Mammary epithelial cell (primary cell): ENCODE measurements at regions of chr14 and their contacts with region 1.

Region 1: GRCh38 chr14:46344327-46344937 is 307.1 kb downstream of the RPL10L start:
- DNase-seq: peak; percentile 12
- H3K4me3 ChIP-seq: no peak overlapping the region
- H3K27ac ChIP-seq: no peak overlapping the region
- H3K4me1 ChIP-seq: no peaks in the 10 kb centered on the region
- H3K27me3 ChIP-seq: no peaks in the 10 kb centered on the region
- CTCF ChIP-seq: peak; percentile 36 to 72

Region 2: DNA sequence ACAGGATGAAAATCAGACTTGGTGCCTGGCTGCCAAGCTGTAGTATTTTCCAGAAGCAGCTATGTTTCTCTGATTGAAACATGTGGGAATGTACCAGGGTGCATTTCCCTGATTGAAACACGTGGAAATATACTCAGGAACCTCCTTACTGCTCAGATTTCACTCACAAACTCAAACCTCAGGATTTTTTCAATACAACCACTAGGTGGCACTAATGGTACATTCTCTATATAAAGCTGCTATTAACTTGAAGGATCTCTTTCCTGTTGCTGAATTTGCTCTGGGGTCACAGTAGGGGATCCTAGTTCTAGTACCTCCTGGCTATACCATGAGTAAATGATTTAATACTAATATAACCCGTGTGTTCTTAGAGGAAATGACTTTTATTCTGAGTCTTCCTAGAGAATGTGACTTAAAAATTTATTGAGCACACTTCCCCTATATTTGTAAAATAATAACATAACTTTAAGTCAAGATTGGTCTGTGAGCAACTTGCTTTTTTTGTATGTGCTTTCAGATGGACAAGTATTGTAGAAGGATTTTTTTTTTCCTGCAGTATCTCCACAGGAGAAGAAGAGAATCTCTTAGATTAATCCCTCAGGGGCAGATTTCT is 917.7 kb before region 1 on chr14:
- CTCF ChIA-PET with region 1: no interaction called
- dilution Hi-C with region 1: no loop called
- in situ Hi-C with region 1: no loop called
- intact Hi-C with region 1: loop called (anchors 10 kb)
- DNase-seq: peak; percentile 49
- H3K4me3 ChIP-seq: no peak overlapping the region
- H3K27ac ChIP-seq: no peak overlapping the region
- H3K4me1 ChIP-seq: no peaks in the 10 kb centered on the region
- H3K27me3 ChIP-seq: no peaks in the 10 kb centered on the region
- CTCF ChIP-seq: peak; percentile 47 to 67

Region 3: GRCh38 chr14:45610318-45610717 is 734.1 kb before region 1 on chr14:
- CTCF ChIA-PET with region 1: no interaction called
- dilution Hi-C with region 1: no loop called
- in situ Hi-C with region 1: no loop called
- intact Hi-C with region 1: loop called (anchors 2 kb)
- DNase-seq: peak; percentile 33
- H3K4me3 ChIP-seq: no peak overlapping the region
- H3K27ac ChIP-seq: no peak overlapping the region
- H3K4me1 ChIP-seq: no peaks in the 10 kb centered on the region
- H3K27me3 ChIP-seq: no peaks in the 10 kb centered on the region
- CTCF ChIP-seq: peak; percentile 45 to 64

Region 4: DNA sequence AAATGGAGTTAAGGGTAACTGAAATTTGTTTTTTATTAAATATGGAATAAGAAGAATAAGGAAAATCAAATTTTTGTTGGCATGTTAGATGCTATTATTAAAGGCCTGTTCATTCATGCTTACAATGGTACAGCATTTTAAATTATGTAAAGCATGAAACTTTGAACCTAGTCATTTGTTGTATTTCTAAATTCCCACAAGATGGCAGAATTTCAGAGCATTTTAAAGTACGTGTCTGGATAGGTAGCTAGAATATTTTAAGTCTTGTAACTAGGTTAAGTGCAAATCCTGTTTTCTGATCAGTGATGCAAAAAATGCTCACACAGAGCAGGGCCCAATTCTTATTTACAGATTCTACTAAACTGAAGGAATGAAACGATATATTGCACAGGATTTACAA is 505.8 kb before region 1 on chr14:
- CTCF ChIA-PET with region 1: no interaction called
- dilution Hi-C with region 1: no loop called
- in situ Hi-C with region 1: no loop called
- intact Hi-C with region 1: loop called (anchors 10 kb)
- DNase-seq: peak; percentile 6
- H3K4me3 ChIP-seq: no peak overlapping the region
- H3K27ac ChIP-seq: no peak overlapping the region
- H3K4me1 ChIP-seq: no peaks in the 10 kb centered on the region
- H3K27me3 ChIP-seq: no peaks in the 10 kb centered on the region
- CTCF ChIP-seq: peak; percentile 17 to 49

Region 5: GRCh38 chr14:46048127-46048526 is 296.3 kb before region 1 on chr14:
- CTCF ChIA-PET with region 1: no interaction called
- dilution Hi-C with region 1: no loop called
- in situ Hi-C with region 1: no loop called
- intact Hi-C with region 1: loop called (anchors 1 kb)
- DNase-seq: peak; percentile 56
- H3K4me3 ChIP-seq: no peak overlapping the region
- H3K27ac ChIP-seq: no peak overlapping the region
- H3K4me1 ChIP-seq: no peaks in the 10 kb centered on the region
- H3K27me3 ChIP-seq: no peaks in the 10 kb centered on the region
- CTCF ChIP-seq: peak; percentile 24 to 42

Region 6: GRCh38 chr14:46250113-46250703 is 94.2 kb before region 1 on chr14:
- CTCF ChIA-PET with region 1: no interaction called
- dilution Hi-C with region 1: no loop called
- in situ Hi-C with region 1: no loop called
- intact Hi-C with region 1: loop called (anchors 1 kb)
- DNase-seq: peak; percentile 2
- H3K4me3 ChIP-seq: no peak overlapping the region
- H3K27ac ChIP-seq: no peak overlapping the region
- H3K4me1 ChIP-seq: no peaks in the 10 kb centered on the region
- H3K27me3 ChIP-seq: no peaks in the 10 kb centered on the region
- CTCF ChIP-seq: peak; percentile 50 to 53